Natural killer cell (primary cell): ENCODE measurements at regions of chr19 and their contacts with region 1.

Region 1: DNA sequence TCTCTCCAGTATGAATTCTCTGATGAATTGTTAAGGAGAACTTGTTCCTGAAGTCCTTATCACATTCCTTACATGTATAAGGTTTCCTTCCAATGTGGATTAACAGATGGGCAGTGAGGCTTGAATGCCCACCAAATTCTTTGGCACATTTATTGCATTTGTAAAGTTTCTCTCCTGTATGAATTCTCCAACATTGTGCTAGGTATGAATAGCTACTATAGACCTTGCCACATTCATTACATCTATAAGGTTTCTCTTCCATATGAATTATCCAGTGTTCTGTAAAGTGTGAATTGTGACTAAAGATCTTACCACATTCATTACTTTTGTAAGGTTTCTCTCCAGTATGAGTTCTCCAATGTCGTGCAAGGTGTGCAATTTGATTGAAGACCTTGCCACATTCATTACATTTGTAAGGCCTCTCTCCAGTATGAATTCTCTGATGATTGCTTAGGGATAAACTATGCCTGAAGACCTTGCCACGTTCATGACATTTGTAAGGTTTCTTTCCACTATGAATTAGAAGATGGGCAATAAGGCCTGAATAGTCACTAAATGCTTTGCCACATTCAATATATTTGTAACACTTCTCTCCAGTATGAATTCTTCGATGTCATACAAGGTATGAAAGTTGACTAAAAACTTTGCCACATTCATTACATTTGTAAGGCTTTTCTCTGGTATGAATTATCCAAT is 20.4 kb downstream of the ZNF578 start:
- DNase-seq: no peak
- ATAC-seq: no peak
- H3K4me3 ChIP-seq: no peak overlapping the region
- H3K4me3 Mint-ChIP-seq: no peak overlapping the region
- H3K27ac ChIP-seq: no peak overlapping the region
- H3K27ac Mint-ChIP-seq: no peak overlapping the region
- H3K4me1 ChIP-seq: no peaks in the 10 kb centered on the region
- H3K4me1 Mint-ChIP-seq: peaks cover 0 to 5% of the 10 kb centered on the region in 2 donors
- H3K27me3 ChIP-seq: no peaks in the 10 kb centered on the region
- H3K27me3 Mint-ChIP-seq: no peaks in the 10 kb centered on the region
- CTCF ChIP-seq: no peak

Region 2: GRCh38 chr19:52397310-52398080 is 76.3 kb before region 1 on chr19 and contains the start of gene ZNF528:
- intact Hi-C with region 1: no loop called
- DNase-seq: peak; percentile 92 to 95
- ATAC-seq: peak; percentile 90 to 98 (median 97)
- H3K4me3 ChIP-seq: peak within 1 kb of the TSS; percentile 64
- H3K4me3 Mint-ChIP-seq: peak within 1 kb of the TSS; percentile 87
- H3K27ac ChIP-seq: peak within 1 kb of the TSS; percentile 57
- H3K27ac Mint-ChIP-seq: peak within 1 kb of the TSS; percentile 89 to 97
- H3K4me1 ChIP-seq: peaks cover 12% of the 10 kb centered on the region
- H3K4me1 Mint-ChIP-seq: peaks cover 22 to 28% of the 10 kb centered on the region in 2 donors
- H3K27me3 ChIP-seq: no peaks in the 10 kb centered on the region
- H3K27me3 Mint-ChIP-seq: no peaks in the 10 kb centered on the region
- CTCF ChIP-seq: no peak
- total RNA-seq, gene ZNF528: 28.8 to 36.5 (median 36.1) TPM

Region 3: GRCh38 chr19:52428937-52429336 is 44.9 kb before region 1 on chr19 and contains the start of gene ZNF534:
- intact Hi-C with region 1: loop called (anchors 10 kb)
- DNase-seq: no peak
- ATAC-seq: no peak
- H3K4me3 ChIP-seq: no peak within 1 kb of the TSS
- H3K4me3 Mint-ChIP-seq: no peak within 1 kb of the TSS
- H3K27ac ChIP-seq: no peak within 1 kb of the TSS
- H3K27ac Mint-ChIP-seq: no peak within 1 kb of the TSS
- H3K4me1 ChIP-seq: no peaks in the 10 kb centered on the region
- H3K4me1 Mint-ChIP-seq: no peaks in the 10 kb centered on the region
- H3K27me3 ChIP-seq: no peaks in the 10 kb centered on the region
- H3K27me3 Mint-ChIP-seq: no peaks in the 10 kb centered on the region
- CTCF ChIP-seq: no peak
- total RNA-seq, gene ZNF534: 0.18 TPM in 1 of 3 donors, not detected in the others

Region 4: DNA sequence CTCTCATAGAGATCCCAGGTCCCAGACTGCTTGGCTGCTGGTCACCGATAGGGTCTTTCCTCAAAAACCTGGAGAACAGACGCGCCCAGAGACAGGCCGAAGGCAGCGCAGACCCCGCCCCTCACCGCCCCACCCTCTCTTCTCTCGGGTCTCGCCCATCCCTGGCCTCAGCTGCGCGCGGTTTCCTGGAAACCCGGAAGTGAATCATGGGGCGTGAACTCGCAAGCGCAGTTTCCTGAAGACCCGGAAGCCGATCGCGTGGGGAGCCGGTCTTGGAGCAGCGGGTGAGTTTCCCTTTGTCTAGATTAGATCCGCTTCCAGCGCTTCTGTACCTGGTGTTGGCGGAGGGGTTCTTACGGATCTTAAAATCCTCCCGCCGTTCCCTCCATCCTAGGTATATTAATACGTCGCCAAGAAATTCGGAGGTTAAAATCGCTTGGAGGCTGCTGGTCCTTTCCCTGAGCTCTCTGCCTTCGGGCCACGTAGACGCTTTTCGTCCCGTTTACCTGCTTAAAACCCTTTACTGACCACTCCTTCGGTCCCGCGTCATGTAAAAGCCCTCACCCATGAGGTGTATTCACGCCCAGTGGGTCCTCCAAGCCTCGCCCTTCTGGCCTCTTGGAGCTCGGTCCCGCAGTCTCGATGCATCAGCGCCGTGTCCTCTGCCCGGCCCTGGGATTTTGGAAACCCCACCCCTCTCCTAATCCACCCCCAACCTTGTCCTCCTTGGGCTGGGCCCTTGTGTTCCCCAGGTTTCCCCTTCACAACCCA is 20.3 kb before region 1 on chr19 and contains the start of gene ZNF578:
- intact Hi-C with region 1: no loop called
- DNase-seq: peak; percentile 66 to 72
- ATAC-seq: peak; percentile 68 to 97 (median 95)
- H3K4me3 ChIP-seq: peak within 1 kb of the TSS; percentile 75
- H3K4me3 Mint-ChIP-seq: peak within 1 kb of the TSS; percentile 91
- H3K27ac ChIP-seq: peak within 1 kb of the TSS; percentile 65
- H3K27ac Mint-ChIP-seq: peak within 1 kb of the TSS; percentile 86 to 88
- H3K4me1 ChIP-seq: peaks cover 12% of the 10 kb centered on the region
- H3K4me1 Mint-ChIP-seq: peaks cover 15 to 27% of the 10 kb centered on the region in 2 donors
- H3K27me3 ChIP-seq: no peaks in the 10 kb centered on the region
- H3K27me3 Mint-ChIP-seq: peaks cover 13 to 18% of the 10 kb centered on the region in 2 donors
- CTCF ChIP-seq: no peak
- total RNA-seq, gene ZNF578: 2.5 to 4.1 (median 3.0) TPM